ENCODE measurements at regions of chr11 and their contacts with region 1.

Region 1: DNA sequence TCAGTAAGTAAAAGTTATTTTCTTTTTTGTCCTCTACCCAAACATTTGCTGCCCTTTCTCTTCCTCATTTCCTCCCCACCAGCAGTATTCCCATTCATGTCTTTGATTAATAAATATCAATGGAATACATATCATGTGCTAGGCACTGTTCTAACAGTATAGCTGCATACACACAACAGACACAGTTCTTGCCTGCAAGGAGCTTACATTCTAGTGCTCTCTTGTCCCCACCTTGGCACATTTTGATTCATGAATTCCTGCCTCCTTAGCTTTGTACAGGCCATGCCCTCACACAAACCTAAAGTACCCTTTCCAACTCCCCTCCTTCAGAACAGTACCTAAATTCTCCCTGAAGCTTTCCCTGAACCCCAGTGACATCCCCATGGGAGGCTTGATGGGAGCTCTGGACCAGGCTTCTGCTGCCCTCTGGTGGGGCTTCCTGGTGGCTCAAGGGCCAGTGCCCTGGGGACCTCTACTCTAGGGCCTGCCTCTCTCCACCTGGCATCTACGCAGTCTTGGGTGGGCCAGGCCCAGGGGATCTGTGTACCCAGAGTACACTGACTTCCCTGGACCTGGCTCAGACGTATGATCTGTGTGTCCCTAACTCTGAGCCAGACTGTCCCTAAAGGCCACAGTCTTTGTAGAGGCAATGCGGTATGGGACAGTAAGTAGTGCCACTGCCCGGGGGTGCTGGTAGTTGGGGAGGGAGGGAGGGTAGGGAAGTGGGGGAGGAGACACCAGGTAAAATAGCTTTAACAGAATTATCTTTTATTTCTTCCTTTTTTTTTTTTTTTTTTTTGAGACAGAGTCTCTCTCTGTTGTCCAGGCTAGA is 14.1 kb downstream of the RPS13 start:
- DNase-seq: peak; percentile 17
- ATAC-seq: peak; percentile 100
- H3K4me3 ChIP-seq: no peak overlapping the region
- H3K27ac ChIP-seq: no peak overlapping the region
- H3K4me1 ChIP-seq: no peaks in the 10 kb centered on the region
- H3K27me3 ChIP-seq: no peaks in the 10 kb centered on the region
- CTCF ChIP-seq: peak; percentile 73 to 91 (median 83)
- EP300 ChIP-seq: no peak
- POLR2A ChIP-seq: no peak
- RAD21 ChIP-seq: peak; percentile 95

Region 2: DNA sequence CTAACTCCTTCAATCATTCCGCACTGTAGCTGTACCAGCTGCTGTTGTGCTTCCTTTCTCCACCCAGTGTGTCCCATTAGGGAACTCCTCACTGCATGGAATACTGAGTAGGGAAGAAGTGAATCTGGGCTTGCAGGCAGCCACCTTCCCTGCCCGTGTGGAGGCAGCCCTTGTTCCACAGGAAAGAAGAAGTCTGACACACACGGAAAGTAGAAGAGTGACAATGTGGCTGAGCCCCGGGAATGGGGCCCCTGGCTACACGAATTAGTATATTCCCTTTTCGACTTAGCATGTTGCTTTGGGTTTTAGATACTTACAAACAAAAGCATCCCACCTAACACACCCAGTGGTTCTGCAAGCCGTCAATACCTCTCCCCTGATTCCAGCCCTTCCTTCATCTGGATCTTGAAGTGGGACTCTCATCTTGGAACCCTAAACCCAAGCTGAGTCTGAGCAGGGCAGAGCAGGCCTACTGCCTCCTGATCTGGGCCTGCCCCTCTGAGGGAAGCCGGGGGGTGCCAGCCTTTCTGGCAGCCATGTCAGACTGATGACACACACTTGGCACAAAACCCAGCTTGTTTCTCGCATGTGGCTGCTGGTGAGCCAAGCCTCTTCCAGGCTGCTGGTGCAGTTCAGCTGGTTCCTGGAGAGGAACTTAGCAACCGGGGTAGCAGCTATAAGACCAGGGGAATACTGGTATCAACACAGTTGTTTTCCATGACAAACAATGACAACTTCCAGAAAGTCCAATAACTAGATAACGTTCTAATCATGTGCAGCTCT is 253.3 kb before region 1 on chr11:
- CTCF ChIA-PET with region 1: interaction called, 4 read pairs
- POLR2A ChIA-PET with region 1: no interaction called
- RAD21 ChIA-PET with region 1: no interaction called
- SMC1A ChIA-PET with region 1: no interaction called
- in situ Hi-C with region 1: loop called (anchors 5 kb)
- intact Hi-C with region 1: no loop called
- DNase-seq: no peak
- ATAC-seq: no peak
- H3K4me3 ChIP-seq: no peak overlapping the region
- H3K27ac ChIP-seq: no peak overlapping the region
- H3K4me1 ChIP-seq: no peaks in the 10 kb centered on the region
- H3K27me3 ChIP-seq: peaks cover 0 to 2% of the 10 kb centered on the region in 2 experiments; a peak in 1 of 4 replicates
- CTCF ChIP-seq: no peak
- EP300 ChIP-seq: no peak
- POLR2A ChIP-seq: no peak
- RAD21 ChIP-seq: no peak

Region 3: DNA sequence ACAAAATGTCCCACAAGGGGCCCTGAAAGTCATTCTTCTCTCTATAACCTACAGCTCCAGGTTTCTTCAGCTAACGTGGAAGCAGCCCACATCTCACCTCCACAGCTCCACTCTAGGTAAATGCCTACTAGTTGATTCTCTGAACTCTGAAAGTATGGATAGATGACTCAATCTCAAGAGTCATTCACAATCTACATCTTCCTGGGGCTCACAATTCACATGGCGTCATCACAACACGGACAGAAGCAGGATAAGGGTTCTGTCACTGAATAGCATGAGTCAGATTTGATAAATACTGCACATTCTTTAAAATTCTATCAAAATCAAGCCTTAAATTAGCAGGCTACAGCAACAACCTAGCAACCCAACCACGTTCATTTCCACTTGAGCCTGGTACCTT is 145.4 kb before region 1 on chr11:
- CTCF ChIA-PET with region 1: interaction called, 6 read pairs
- POLR2A ChIA-PET with region 1: no interaction called
- RAD21 ChIA-PET with region 1: interaction called, 10 read pairs
- SMC1A ChIA-PET with region 1: interaction called, 3 read pairs
- in situ Hi-C with region 1: no loop called
- intact Hi-C with region 1: no loop called
- DNase-seq: no peak
- ATAC-seq: no peak
- H3K4me3 ChIP-seq: no peak overlapping the region
- H3K27ac ChIP-seq: no peak overlapping the region
- H3K4me1 ChIP-seq: no peaks in the 10 kb centered on the region
- H3K27me3 ChIP-seq: no peaks in the 10 kb centered on the region
- CTCF ChIP-seq: no peak
- EP300 ChIP-seq: no peak
- POLR2A ChIP-seq: no peak
- RAD21 ChIP-seq: no peak

Region 4: DNA sequence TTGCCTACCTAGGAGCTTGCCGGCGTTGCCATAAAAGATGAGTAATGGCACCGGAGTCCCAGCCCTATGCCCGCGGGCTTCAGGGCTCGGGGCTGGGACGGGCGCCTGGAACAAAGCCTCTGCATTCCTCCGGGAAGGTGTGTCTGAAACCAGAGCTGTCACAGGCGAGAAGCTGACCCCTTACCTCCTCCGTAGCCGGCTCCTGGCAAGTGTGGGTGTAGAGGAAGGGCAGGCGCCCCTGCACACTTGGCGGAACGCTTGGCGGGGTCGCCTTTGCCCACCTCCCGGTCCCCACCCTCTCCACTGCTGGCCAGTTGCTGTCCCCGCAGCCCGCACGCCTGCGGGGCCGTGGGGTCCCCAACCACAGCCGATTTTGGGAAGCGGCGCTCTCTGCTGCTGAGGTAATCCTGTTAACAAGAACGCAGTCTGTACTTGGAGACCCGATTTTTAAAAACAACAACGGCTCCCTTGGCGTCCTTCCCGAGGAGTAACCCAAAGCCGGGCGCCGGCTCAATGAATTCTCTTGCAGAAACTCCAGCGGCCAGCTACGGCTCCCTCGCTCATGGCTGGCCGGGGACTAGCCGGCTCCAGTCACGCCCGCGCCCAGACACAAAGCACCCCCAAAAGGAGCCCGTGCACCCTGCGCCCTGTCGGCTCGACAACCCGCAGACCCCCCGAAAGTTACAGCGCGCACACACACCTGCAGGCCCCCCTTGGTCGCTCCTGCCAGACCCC is 138.4 kb before region 1 on chr11:
- CTCF ChIA-PET with region 1: interaction called, 12 read pairs
- POLR2A ChIA-PET with region 1: no interaction called
- RAD21 ChIA-PET with region 1: interaction called, 10 read pairs
- SMC1A ChIA-PET with region 1: interaction called, 3 read pairs
- in situ Hi-C with region 1: no loop called
- intact Hi-C with region 1: no loop called
- DNase-seq: no peak
- ATAC-seq: peak; percentile 39
- H3K4me3 ChIP-seq: peak overlapping the region; percentile 64
- H3K27ac ChIP-seq: no peak overlapping the region
- H3K4me1 ChIP-seq: peaks cover 22% of the 10 kb centered on the region
- H3K27me3 ChIP-seq: peaks cover 12 to 13% of the 10 kb centered on the region in 2 experiments
- CTCF ChIP-seq: no peak
- EP300 ChIP-seq: no peak
- POLR2A ChIP-seq: no peak
- RAD21 ChIP-seq: no peak

Region 5: DNA sequence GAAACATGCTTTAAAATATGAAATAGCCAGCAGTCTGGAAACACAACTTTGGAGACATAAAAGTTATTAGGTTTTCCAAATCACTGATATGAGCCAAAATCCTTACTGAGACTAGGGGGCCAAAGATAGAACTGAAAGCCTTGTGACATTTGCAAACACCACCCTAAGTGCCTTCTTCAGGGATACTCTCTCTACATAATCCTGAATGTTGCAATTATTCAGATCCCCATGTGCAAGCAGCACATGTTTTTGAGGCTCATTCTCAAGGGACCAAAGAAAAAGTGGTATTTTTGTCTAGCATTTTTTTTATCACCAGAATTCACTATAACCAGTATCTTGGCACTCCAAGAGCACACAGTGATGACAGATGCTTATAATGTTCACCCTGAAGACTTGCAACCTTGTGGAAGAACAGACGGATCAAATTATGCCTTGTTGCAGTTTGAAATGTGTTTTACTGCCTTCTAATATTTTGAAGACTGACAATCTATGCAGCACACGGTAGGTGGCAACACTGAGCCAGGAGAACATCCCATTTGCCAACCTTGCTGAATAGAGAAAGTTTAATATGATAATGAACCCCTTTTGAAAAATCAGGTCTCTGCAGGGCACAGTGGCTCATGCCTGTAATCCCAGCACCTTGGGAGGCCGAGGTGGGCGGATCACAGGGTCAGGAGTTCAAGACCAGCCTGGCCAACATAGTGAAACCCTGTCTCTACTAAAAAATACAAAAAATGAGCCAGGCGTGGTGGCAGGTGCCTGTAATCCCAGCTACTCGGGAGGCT is 127.7 kb before region 1 on chr11:
- CTCF ChIA-PET with region 1: interaction called, 126 read pairs
- POLR2A ChIA-PET with region 1: no interaction called
- RAD21 ChIA-PET with region 1: interaction called, 89 read pairs
- SMC1A ChIA-PET with region 1: interaction called, 80 read pairs
- in situ Hi-C with region 1: no loop called
- intact Hi-C with region 1: loop called (anchors 1 kb)
- DNase-seq: no peak
- ATAC-seq: peak; percentile 88
- H3K4me3 ChIP-seq: no peak overlapping the region
- H3K27ac ChIP-seq: no peak overlapping the region
- H3K4me1 ChIP-seq: no peaks in the 10 kb centered on the region
- H3K27me3 ChIP-seq: no peaks in the 10 kb centered on the region; a peak in 1 of 4 replicates
- CTCF ChIP-seq: peak; percentile 64 to 85 (median 78)
- EP300 ChIP-seq: no peak
- POLR2A ChIP-seq: no peak
- RAD21 ChIP-seq: peak; percentile 86

Region 6: DNA sequence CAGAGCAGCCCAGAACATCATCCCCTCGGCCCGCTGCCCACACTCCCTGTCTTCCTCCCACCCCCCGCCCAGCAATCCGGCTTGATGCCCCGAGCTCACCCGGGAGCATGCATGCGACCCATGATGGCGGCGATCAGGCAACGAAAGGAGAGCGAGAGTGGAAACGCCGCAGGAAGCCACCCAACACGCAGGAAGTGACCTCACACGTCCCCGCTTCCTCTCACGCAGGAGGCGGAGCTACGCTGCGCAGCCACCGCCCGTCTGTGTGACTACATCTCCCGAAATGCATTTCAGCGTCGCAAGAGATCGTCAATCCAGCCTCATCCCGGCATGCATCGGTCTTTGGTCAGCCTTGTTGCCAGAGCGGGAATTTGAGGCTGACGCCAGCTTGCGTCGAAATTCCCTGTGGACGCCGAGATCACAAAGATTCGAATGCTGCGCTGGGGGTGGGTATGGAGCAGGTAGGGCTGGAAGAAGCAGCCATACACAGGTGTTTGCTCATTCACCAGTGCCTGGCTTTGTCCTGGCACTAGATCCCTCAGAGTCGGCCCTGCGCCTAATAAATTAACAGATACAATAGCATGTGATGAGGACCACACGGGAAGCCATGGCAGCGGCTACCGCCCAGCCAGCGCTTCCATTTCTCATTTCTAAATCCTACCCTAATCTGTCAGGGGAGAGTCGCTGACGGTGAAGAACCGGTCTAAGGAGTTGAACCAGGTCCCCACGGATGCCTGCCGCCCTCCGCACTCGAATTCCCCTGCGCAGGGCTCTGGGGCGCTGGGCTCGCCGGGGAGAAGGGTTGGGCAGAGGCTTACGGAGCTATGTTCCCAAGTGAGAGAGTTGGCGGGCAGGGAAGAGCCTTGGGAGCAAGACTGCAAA is 14.4 kb after region 1 on chr11 and contains the start of gene RPS13:
- CTCF ChIA-PET with region 1: interaction called, 10 read pairs
- POLR2A ChIA-PET with region 1: interaction called, 4 read pairs
- RAD21 ChIA-PET with region 1: interaction called, 7 read pairs
- SMC1A ChIA-PET with region 1: interaction called, 5 read pairs
- in situ Hi-C with region 1: no loop called
- intact Hi-C with region 1: no loop called
- DNase-seq: peak; percentile 97
- ATAC-seq: peak; percentile 93
- H3K4me3 ChIP-seq: peak within 1 kb of the TSS; percentile 90
- H3K27ac ChIP-seq: peak within 1 kb of the TSS; percentile 95
- H3K4me1 ChIP-seq: no peaks in the 10 kb centered on the region; the same call in 1 of the 2 replicates
- H3K27me3 ChIP-seq: no peaks in the 10 kb centered on the region
- CTCF ChIP-seq: no peak
- EP300 ChIP-seq: no peak
- POLR2A ChIP-seq: peak; percentile 100
- RAD21 ChIP-seq: no peak
- polyA plus RNA-seq, gene RPS13: 4,150 to 4,753 TPM

Region 7: GRCh38 chr11:17343907-17344306 is 280.5 kb after region 1 on chr11:
- CTCF ChIA-PET with region 1: no interaction called
- POLR2A ChIA-PET with region 1: no interaction called
- RAD21 ChIA-PET with region 1: no interaction called
- SMC1A ChIA-PET with region 1: no interaction called
- in situ Hi-C with region 1: no loop called
- intact Hi-C with region 1: no loop called
- DNase-seq: no peak
- ATAC-seq: no peak
- H3K4me3 ChIP-seq: no peak overlapping the region
- H3K27ac ChIP-seq: no peak overlapping the region
- H3K4me1 ChIP-seq: no peaks in the 10 kb centered on the region
- H3K27me3 ChIP-seq: no peaks in the 10 kb centered on the region
- CTCF ChIP-seq: no peak
- EP300 ChIP-seq: no peak
- POLR2A ChIP-seq: no peak
- RAD21 ChIP-seq: no peak